Colonic mucosa (tissue), 4 donors: ENCODE measurements at regions of chr15 and their contacts with region 1.

Region 1: GRCh38 chr15:75801859-75802593 is 41.2 kb upstream of the UBE2Q2 start:
- DNase-seq: peak; percentile 78
- H3K4me3 ChIP-seq: no peak overlapping the region
- H3K27ac ChIP-seq: no peak overlapping the region
- H3K4me1 ChIP-seq: peaks cover 3% of the 10 kb centered on the region
- H3K27me3 ChIP-seq: peaks cover 17% of the 10 kb centered on the region
- CTCF ChIP-seq: peak; percentile 92

Region 2: GRCh38 chr15:75389791-75390382 is 412.1 kb before region 1 on chr15:
- intact Hi-C with region 1: no loop called
- DNase-seq: no peak
- H3K4me3 ChIP-seq: no peak overlapping the region
- H3K27ac ChIP-seq: no peak overlapping the region
- H3K4me1 ChIP-seq: no peaks in the 10 kb centered on the region
- H3K27me3 ChIP-seq: no peaks in the 10 kb centered on the region
- CTCF ChIP-seq: no peak

Region 3: GRCh38 chr15:75684642-75685041 is 117.4 kb before region 1 on chr15:
- intact Hi-C with region 1: loop called (anchors 5 kb)
- DNase-seq: no peak
- H3K4me3 ChIP-seq: no peak overlapping the region
- H3K27ac ChIP-seq: no peak overlapping the region
- H3K4me1 ChIP-seq: no peaks in the 10 kb centered on the region
- H3K27me3 ChIP-seq: no peaks in the 10 kb centered on the region
- CTCF ChIP-seq: no peak

Region 4: GRCh38 chr15:75727851-75728715 is 73.9 kb before region 1 on chr15:
- intact Hi-C with region 1: loop called (anchors 5 kb)
- DNase-seq: peak; percentile 62
- H3K4me3 ChIP-seq: no peak overlapping the region
- H3K27ac ChIP-seq: no peak overlapping the region
- H3K4me1 ChIP-seq: no peaks in the 10 kb centered on the region
- H3K27me3 ChIP-seq: no peaks in the 10 kb centered on the region
- CTCF ChIP-seq: peak; percentile 38

Region 5: DNA sequence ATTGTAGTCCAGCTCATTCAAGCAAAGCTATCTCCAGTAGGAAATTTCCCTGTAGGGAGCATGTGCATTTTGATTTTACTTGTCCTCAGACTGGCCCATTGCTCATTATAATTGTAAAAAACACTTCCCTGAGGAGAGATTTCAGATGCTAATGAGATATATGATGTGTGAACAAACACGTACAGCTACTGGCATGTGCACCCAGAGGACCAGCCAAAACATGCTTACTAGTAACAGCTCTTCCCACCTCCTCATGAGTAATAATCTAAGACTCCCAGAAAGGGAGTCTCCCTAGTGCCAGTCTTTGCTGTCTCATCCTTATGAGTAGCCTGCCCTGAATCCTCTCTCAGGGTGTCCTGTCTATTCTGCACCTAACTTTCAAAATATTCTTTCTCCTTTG is 145.1 kb after region 1 on chr15:
- intact Hi-C with region 1: no loop called
- DNase-seq: no peak
- H3K4me3 ChIP-seq: no peak overlapping the region
- H3K27ac ChIP-seq: no peak overlapping the region
- H3K4me1 ChIP-seq: no peaks in the 10 kb centered on the region
- H3K27me3 ChIP-seq: no peaks in the 10 kb centered on the region
- CTCF ChIP-seq: no peak